Activated CD4-positive, alpha-beta T cell treated with anti-CD3 and anti-CD28 coated beads for 36 hours (primary cell): ENCODE measurements at regions of chr20 and their contacts with region 1.

Region 1: GRCh38 chr20:2101865-2102584 is 398 bp downstream of the STK35 start:
- DNase-seq: peak; percentile 93
- ATAC-seq: peak; percentile 83
- H3K4me3 Mint-ChIP-seq: peak overlapping the region; percentile 81
- H3K27ac Mint-ChIP-seq: peak overlapping the region; percentile 100
- H3K4me1 Mint-ChIP-seq: peaks cover 37% of the 10 kb centered on the region
- H3K27me3 Mint-ChIP-seq: no peaks in the 10 kb centered on the region

Region 2: DNA sequence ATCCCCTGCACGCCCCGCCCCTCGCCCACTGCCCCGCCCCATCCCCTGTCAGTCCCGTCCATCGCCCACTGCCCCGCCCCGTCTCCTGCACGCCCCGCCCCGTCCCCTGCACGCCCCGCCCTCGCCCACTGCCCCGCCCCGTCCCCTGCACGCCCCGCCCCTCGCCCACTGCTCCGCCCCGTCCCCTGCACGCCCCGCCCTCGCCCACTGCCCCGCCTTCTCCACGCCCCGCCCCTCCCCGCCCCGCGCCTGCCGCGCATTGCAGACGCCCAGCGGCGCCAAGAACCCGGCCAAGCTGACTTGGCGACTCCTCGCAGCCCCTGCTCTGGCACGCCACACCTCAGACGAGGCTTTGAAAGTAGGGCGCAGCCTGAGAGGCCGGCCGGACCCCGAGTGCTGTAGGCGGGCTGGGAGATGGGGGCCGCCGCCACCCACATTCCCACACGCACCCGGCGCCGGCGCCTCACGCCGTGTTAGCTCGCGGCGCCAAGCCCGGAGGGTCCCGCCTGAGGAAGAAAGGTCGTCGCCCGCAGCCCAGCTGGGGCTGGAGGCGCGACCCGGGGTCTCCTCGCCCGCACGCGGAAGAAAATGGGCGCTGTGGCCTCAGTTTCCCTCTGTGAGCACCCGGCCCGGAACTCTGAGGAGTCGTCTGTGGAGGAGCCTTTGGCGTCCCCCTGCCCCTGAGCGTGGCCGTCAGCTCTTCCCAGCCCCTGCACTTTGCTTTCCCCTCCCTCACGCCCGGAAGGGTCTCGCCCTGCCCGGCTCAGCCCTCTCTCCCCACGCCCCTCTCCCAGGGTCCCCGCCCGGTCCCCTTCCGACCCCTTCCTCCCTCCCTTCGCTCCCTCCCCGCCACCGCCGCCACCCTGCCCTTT is 876.0 kb before region 1 on chr20 and contains the start of gene RAD21L1:
- CTCF ChIA-PET with region 1: no interaction called
- POLR2A ChIA-PET with region 1: no interaction called
- intact Hi-C with region 1: loop called in 1 of 2 experiments (anchors 1 kb)
- DNase-seq: peak; percentile 94
- ATAC-seq: peak; percentile 85
- H3K4me3 Mint-ChIP-seq: peak within 1 kb of the TSS; percentile 75
- H3K27ac Mint-ChIP-seq: peak within 1 kb of the TSS; percentile 79
- H3K4me1 Mint-ChIP-seq: peaks cover 11% of the 10 kb centered on the region
- H3K27me3 Mint-ChIP-seq: peaks cover 9% of the 10 kb centered on the region
- total RNA-seq, gene RAD21L1: 0.32 TPM in 1 of 2 experiments, not detected in the other

Region 3: DNA sequence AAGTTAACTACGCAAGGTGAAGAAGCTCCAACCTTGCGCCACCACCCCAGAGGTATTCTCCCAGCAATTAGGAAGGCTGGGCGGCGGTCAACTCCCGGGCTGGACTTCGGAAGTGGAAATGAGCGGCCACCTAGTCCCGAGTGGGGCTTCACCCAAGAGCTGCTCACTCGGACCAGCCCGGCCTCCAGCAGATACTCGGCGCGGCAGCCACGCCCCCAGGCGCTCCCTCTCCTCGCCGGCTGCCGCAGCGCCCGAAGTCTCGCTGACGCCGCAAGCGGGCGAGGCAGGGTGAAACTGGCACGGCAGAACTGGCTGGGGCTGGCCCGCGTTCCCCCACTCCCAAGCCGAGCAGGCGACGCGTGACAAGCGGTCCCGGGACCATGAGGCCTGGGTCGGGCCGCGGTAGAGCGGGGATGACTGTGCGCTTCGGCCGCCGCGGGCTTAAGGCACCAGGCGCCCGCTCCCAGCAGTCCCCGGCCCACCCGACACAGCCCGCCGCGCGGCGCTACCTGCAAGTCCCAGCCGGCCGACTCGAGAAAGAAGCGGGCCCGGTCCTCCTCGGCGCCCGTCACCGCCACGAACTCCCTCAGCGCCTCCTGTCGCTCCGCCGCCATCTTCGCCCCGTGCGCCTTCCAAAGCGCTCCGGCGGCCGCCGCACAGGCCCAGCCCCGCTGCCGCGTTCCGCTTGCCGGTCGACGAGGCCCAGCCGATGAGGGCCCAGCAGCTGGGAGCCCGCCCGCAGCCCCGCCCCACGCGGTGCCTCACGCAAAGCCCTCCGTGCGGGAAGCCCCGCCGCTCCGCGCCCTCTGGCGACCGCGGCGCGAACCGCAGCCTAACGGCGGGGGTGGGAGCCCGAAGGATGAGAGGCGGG is 635.6 kb before region 1 on chr20 and contains the start of gene NSFL1C:
- CTCF ChIA-PET with region 1: no interaction called
- POLR2A ChIA-PET with region 1: no interaction called
- intact Hi-C with region 1: loop called in 1 of 2 experiments (anchors 1 kb)
- DNase-seq: peak; percentile 99
- ATAC-seq: peak; percentile 96
- H3K4me3 Mint-ChIP-seq: peak within 1 kb of the TSS; percentile 85
- H3K27ac Mint-ChIP-seq: peak within 1 kb of the TSS; percentile 85
- H3K4me1 Mint-ChIP-seq: peaks cover 42% of the 10 kb centered on the region
- H3K27me3 Mint-ChIP-seq: peaks cover 6% of the 10 kb centered on the region
- total RNA-seq, gene NSFL1C: 71.3 to 78.1 TPM

Region 4: GRCh38 chr20:2086177-2086979 is 15.6 kb before region 1 on chr20:
- CTCF ChIA-PET with region 1: no interaction called
- POLR2A ChIA-PET with region 1: no interaction called
- intact Hi-C with region 1: no loop called
- DNase-seq: no peak
- ATAC-seq: no peak
- H3K4me3 Mint-ChIP-seq: no peak overlapping the region
- H3K27ac Mint-ChIP-seq: no peak overlapping the region
- H3K4me1 Mint-ChIP-seq: no peaks in the 10 kb centered on the region
- H3K27me3 Mint-ChIP-seq: peaks cover 22% of the 10 kb centered on the region

Region 5: GRCh38 chr20:2114990-2115681 is 13.1 kb after region 1 on chr20:
- CTCF ChIA-PET with region 1: interaction called, 6 read pairs
- POLR2A ChIA-PET with region 1: interaction called, 4 read pairs
- intact Hi-C with region 1: loop called (anchors 1 to 2 kb)
- DNase-seq: no peak
- ATAC-seq: no peak
- H3K4me3 Mint-ChIP-seq: no peak overlapping the region
- H3K27ac Mint-ChIP-seq: peak overlapping the region; percentile 11
- H3K4me1 Mint-ChIP-seq: peaks cover 78% of the 10 kb centered on the region
- H3K27me3 Mint-ChIP-seq: no peaks in the 10 kb centered on the region

Region 6: GRCh38 chr20:2230716-2231488 is 128.9 kb after region 1 on chr20:
- CTCF ChIA-PET with region 1: no interaction called
- POLR2A ChIA-PET with region 1: no interaction called
- intact Hi-C with region 1: no loop called
- DNase-seq: no peak
- ATAC-seq: no peak
- H3K4me3 Mint-ChIP-seq: no peak overlapping the region
- H3K27ac Mint-ChIP-seq: no peak overlapping the region
- H3K4me1 Mint-ChIP-seq: no peaks in the 10 kb centered on the region
- H3K27me3 Mint-ChIP-seq: no peaks in the 10 kb centered on the region

Region 7: DNA sequence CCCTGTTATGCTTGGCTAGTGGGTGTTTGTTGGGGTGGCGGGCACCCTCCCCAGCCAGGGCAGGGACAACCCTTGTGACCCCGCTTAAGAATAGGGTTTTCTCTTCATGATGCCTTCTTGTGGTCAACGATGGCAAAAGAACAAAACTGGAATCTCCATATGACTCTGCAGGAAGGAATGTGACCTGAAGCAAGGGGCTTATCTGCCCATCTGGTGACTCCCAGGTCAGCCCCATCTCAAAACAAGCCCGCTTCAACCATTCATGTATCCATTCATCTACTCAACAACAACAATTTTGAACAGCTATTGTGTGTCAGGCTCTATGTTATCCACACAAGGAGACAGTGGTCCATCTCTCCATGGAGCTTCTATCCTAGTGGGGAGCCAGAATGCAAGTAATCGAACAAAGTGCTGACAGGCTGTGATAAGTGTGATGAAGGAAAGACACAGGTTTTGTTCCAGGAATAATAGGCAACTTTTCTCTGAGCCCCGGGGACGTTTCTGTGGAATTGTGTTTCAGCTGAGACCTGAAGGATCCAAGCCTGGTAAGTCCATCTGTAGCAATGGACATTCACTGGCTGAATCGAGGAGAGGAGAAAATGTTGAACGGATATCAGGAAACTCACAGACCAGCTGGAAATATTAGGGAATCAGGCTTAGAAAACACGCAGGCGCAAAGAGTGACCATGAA is 247.9 kb after region 1 on chr20:
- CTCF ChIA-PET with region 1: no interaction called
- POLR2A ChIA-PET with region 1: no interaction called
- intact Hi-C with region 1: loop called in 1 of 2 experiments (anchors 2 kb)
- DNase-seq: no peak
- ATAC-seq: no peak
- H3K4me3 Mint-ChIP-seq: no peak overlapping the region
- H3K27ac Mint-ChIP-seq: no peak overlapping the region
- H3K4me1 Mint-ChIP-seq: peaks cover 6% of the 10 kb centered on the region
- H3K27me3 Mint-ChIP-seq: peaks cover 17% of the 10 kb centered on the region

Region 8: GRCh38 chr20:2508631-2509467 is 406.8 kb after region 1 on chr20 and contains the start of gene ZNF343:
- CTCF ChIA-PET with region 1: no interaction called
- POLR2A ChIA-PET with region 1: no interaction called
- intact Hi-C with region 1: loop called in 1 of 2 experiments (anchors 1 kb)
- DNase-seq: peak; percentile 88
- ATAC-seq: peak; percentile 95
- H3K4me3 Mint-ChIP-seq: peak within 1 kb of the TSS; percentile 85
- H3K27ac Mint-ChIP-seq: peak within 1 kb of the TSS; percentile 95
- H3K4me1 Mint-ChIP-seq: peaks cover 8% of the 10 kb centered on the region
- H3K27me3 Mint-ChIP-seq: peaks cover 5% of the 10 kb centered on the region
- total RNA-seq, gene ZNF343: 9.9 to 12.3 TPM

Region 9: GRCh38 chr20:3820048-3820900 is 1718.2 kb after region 1 on chr20 and contains the start of gene AP5S1:
- CTCF ChIA-PET with region 1: no interaction called
- POLR2A ChIA-PET with region 1: no interaction called
- intact Hi-C with region 1: loop called in 1 of 2 experiments (anchors 5 kb)
- DNase-seq: peak; percentile 96
- ATAC-seq: peak; percentile 86
- H3K4me3 Mint-ChIP-seq: peak within 1 kb of the TSS; percentile 89
- H3K27ac Mint-ChIP-seq: peak within 1 kb of the TSS; percentile 96
- H3K4me1 Mint-ChIP-seq: peaks cover 33% of the 10 kb centered on the region
- H3K27me3 Mint-ChIP-seq: no peaks in the 10 kb centered on the region
- total RNA-seq, gene AP5S1: 9.1 to 11.3 TPM